GM12878 (cell line): ENCODE measurements at regions of chr3 and their contacts with region 1.

Region 1: DNA sequence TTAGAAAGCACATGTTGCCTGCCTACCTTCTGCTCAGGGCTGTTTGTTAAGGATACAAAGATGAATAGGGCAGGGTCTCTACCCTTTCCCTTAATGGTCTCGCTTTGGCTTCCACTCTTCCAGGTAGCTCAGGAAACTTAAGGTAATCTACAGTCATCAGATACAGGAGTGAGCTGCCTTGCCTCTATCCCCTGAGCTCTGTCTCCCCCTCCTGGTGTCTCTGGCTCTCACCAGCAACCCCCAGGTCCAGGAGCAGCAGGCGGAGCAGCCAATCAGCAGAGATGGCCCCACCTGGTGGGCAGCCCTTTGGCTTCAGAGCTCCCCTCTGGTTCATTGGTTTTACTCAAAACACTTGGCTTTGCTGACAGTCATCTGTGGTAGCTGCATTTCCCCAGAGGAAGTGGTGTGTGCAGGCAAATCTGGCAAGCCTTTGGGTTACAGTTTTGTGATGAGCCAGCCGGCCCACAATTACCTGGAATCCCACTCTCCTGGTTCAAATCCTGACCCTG is 8.5 kb upstream of the CX3CR1 start:
- DNase-seq: peak; percentile 95
- ATAC-seq: peak; percentile 97
- H3K4me3 ChIP-seq: no peak overlapping the region
- H3K27ac ChIP-seq: no peak overlapping the region
- H3K4me1 ChIP-seq: peaks cover 17% of the 10 kb centered on the region
- H3K27me3 ChIP-seq: no peaks in the 10 kb centered on the region
- CTCF ChIP-seq: peak; percentile 93 to 99 (median 99); a peak in 5 of 6 replicates
- EP300 ChIP-seq: peak in 1 of 2 experiments; percentile 65; a peak in 2 of 4 replicates
- POLR2A ChIP-seq: no peak
- RAD21 ChIP-seq: peak; percentile 99

Region 2: DNA sequence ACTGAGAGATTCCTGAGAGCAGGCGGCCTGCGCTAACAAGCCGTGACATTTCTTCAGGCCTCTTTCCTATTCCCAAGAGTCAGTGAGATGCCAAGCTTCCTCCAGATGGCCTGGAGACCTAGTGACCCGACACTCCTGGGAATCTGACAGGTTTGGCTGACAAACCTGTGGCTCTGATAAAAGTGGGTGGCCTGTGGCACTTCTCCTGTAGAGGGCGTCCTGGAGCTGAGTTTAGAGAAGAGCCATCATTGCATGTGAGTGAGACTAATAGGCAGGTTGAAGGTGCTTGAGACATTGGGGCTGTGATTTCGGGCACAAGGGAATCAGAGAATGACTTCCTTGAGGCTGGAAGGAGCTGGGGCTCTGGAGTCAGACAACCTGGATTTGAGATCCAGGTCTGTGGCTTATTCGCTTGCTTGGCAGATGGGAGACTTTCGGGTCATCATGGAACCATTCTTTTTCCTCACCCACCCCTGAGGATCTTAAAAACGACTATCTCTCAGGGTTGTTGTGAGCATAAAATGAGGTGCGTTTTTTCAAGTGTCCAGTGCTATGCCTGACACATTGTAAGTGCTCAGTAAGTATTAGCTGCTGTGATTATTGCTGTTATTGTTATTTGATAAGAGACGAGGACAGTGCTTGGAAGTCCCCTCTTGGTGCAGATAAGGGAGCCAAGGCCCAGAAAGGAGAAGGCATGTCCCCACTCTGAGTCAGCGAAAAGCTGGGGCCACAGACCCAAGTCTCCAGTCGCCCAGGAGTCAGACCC is 549.5 kb before region 1 on chr3:
- CTCF ChIA-PET with region 1: no interaction called
- POLR2A ChIA-PET with region 1: no interaction called
- RAD21 ChIA-PET with region 1: interaction called, 4 read pairs
- SMC1A ChIA-PET with region 1: no interaction called
- in situ Hi-C with region 1: no loop called
- intact Hi-C with region 1: loop called (anchors 10 kb)
- DNase-seq: no peak
- ATAC-seq: peak; percentile 65
- H3K4me3 ChIP-seq: no peak overlapping the region
- H3K27ac ChIP-seq: no peak overlapping the region
- H3K4me1 ChIP-seq: no peaks in the 10 kb centered on the region
- H3K27me3 ChIP-seq: peaks cover 0 to 3% of the 10 kb centered on the region in 2 experiments; a peak in 2 of 4 replicates
- CTCF ChIP-seq: peak; percentile 49 to 63 (median 60)
- EP300 ChIP-seq: no peak
- POLR2A ChIP-seq: no peak
- RAD21 ChIP-seq: peak; percentile 46

Region 3: GRCh38 chr3:39101022-39101689 is 187.2 kb before region 1 on chr3:
- CTCF ChIA-PET with region 1: interaction called, 39 read pairs
- POLR2A ChIA-PET with region 1: interaction called, 3 read pairs
- RAD21 ChIA-PET with region 1: interaction called, 25 read pairs
- SMC1A ChIA-PET with region 1: interaction called, 15 read pairs
- in situ Hi-C with region 1: loop called (anchors 5 kb)
- intact Hi-C with region 1: loop called (anchors 1 kb)
- DNase-seq: no peak
- ATAC-seq: peak; percentile 89
- H3K4me3 ChIP-seq: no peak overlapping the region
- H3K27ac ChIP-seq: no peak overlapping the region
- H3K4me1 ChIP-seq: peaks cover 5% of the 10 kb centered on the region
- H3K27me3 ChIP-seq: no peaks in the 10 kb centered on the region
- CTCF ChIP-seq: peak; percentile 72 to 84 (median 83)
- EP300 ChIP-seq: no peak
- POLR2A ChIP-seq: no peak
- RAD21 ChIP-seq: peak; percentile 85

Region 4: GRCh38 chr3:39180546-39181346 is 107.6 kb before region 1 on chr3:
- CTCF ChIA-PET with region 1: interaction called, 756 read pairs
- POLR2A ChIA-PET with region 1: interaction called, 8 read pairs
- RAD21 ChIA-PET with region 1: interaction called, 456 read pairs
- SMC1A ChIA-PET with region 1: interaction called, 648 read pairs
- in situ Hi-C with region 1: loop called (anchors 5 kb)
- intact Hi-C with region 1: no loop called
- DNase-seq: peak; percentile 39
- ATAC-seq: peak; percentile 94
- H3K4me3 ChIP-seq: peak overlapping the region; percentile 61; the same call in 1 of the 2 replicates
- H3K27ac ChIP-seq: no peak overlapping the region
- H3K4me1 ChIP-seq: peaks cover 12% of the 10 kb centered on the region
- H3K27me3 ChIP-seq: no peaks in the 10 kb centered on the region
- CTCF ChIP-seq: no peak
- EP300 ChIP-seq: no peak
- POLR2A ChIP-seq: no peak
- RAD21 ChIP-seq: no peak

Region 5: DNA sequence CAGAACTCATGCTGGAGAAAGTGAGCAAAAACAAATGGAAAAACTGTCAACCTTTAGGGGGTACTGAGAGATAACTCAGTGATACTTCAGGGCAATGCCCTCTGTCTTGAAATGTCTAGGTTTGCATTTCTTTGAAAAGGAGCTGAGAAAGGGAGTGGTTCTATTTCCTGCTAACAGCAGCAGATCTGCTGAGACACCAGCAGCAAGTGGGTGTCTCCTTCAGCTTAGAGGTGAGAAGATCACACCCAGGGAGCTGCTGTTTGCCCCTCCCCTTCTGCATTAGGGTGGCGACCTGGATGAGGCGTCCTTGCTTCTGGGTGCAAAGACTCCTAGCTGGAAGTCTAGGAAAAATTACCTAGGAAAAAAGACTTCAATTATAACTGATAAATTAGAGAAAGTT is 53.6 kb before region 1 on chr3:
- CTCF ChIA-PET with region 1: interaction called, 19 read pairs
- POLR2A ChIA-PET with region 1: interaction called, 3 read pairs
- RAD21 ChIA-PET with region 1: interaction called, 5 read pairs
- SMC1A ChIA-PET with region 1: interaction called, 14 read pairs
- in situ Hi-C with region 1: no loop called
- intact Hi-C with region 1: no loop called
- DNase-seq: no peak
- ATAC-seq: peak; percentile 27; the same call in 2 of the 3 replicates
- H3K4me3 ChIP-seq: no peak overlapping the region
- H3K27ac ChIP-seq: no peak overlapping the region
- H3K4me1 ChIP-seq: no peaks in the 10 kb centered on the region
- H3K27me3 ChIP-seq: peaks cover 3 to 16% of the 10 kb centered on the region in 2 experiments
- CTCF ChIP-seq: no peak
- EP300 ChIP-seq: no peak
- POLR2A ChIP-seq: no peak
- RAD21 ChIP-seq: no peak

Region 6: DNA sequence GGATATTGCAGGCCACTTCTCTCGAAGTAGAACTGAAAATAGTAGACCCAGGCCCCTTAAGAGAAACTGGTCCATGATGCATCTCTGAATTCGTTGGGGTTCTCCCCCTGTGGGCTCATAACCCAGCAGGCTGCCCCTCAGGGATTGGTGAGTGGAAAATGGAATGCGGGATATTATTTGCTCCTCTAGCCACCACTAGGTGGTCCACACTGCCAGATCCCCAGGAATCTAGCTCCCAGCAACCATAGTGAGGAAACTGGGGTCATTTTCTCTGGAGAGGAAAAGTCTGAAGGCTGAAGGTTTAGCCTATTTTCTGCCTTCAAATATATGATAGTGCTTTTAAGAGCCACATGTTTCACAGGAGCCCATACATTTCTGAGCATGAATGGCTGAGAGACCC is 15.2 kb before region 1 on chr3:
- CTCF ChIA-PET with region 1: interaction called, 191 read pairs
- POLR2A ChIA-PET with region 1: interaction called, 4 read pairs
- RAD21 ChIA-PET with region 1: interaction called, 22 read pairs
- SMC1A ChIA-PET with region 1: interaction called, 163 read pairs
- in situ Hi-C with region 1: no loop called
- intact Hi-C with region 1: no loop called
- DNase-seq: no peak
- ATAC-seq: no peak
- H3K4me3 ChIP-seq: no peak overlapping the region
- H3K27ac ChIP-seq: no peak overlapping the region
- H3K4me1 ChIP-seq: peaks cover under 1% of the 10 kb centered on the region
- H3K27me3 ChIP-seq: peaks cover 0 to 3% of the 10 kb centered on the region in 2 experiments; a peak in 1 of 4 replicates
- CTCF ChIP-seq: no peak
- EP300 ChIP-seq: no peak
- POLR2A ChIP-seq: no peak
- RAD21 ChIP-seq: no peak

Region 7: DNA sequence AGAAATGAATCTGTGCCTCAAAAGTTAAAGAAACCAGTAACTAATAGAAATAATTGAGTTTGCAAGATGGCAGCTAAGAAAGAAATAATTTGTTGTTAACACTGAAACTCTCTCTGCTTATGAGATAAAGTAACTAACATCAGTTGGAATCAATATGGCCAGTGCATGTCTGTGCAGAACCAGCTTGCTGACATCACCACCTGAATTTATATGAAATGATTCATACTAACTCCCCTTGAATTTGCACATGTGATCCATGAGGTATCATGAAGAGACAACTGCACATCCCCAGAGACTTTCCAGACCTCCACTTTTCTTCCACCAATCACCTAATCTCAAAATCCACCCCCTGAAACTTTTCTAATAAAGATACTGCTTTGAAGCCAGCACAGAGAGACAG is 84.5 kb after region 1 on chr3:
- CTCF ChIA-PET with region 1: interaction called, 323 read pairs
- POLR2A ChIA-PET with region 1: interaction called, 11 read pairs
- RAD21 ChIA-PET with region 1: interaction called, 232 read pairs
- SMC1A ChIA-PET with region 1: interaction called, 234 read pairs
- in situ Hi-C with region 1: no loop called
- intact Hi-C with region 1: loop called (anchors 1 kb)
- DNase-seq: no peak
- ATAC-seq: no peak
- H3K4me3 ChIP-seq: no peak overlapping the region
- H3K27ac ChIP-seq: no peak overlapping the region
- H3K4me1 ChIP-seq: peaks cover 12% of the 10 kb centered on the region
- H3K27me3 ChIP-seq: no peaks in the 10 kb centered on the region
- CTCF ChIP-seq: no peak
- EP300 ChIP-seq: no peak
- POLR2A ChIP-seq: no peak
- RAD21 ChIP-seq: no peak